Caco-2 (cell line): ENCODE measurements at regions of chr15 and their contacts with region 1.

Region 1: GRCh38 chr15:45943240-45943639 is 308.4 kb downstream of the SQOR start:
- DNase-seq: peak; percentile 38 to 70
- H3K4me3 ChIP-seq: no peak overlapping the region
- H3K4me3 Mint-ChIP-seq: no peak overlapping the region
- H3K27ac Mint-ChIP-seq: no peak overlapping the region
- H3K4me1 ChIP-seq: peaks cover 29% of the 10 kb centered on the region
- H3K4me1 Mint-ChIP-seq: peaks cover 9% of the 10 kb centered on the region
- H3K27me3 ChIP-seq: no peaks in the 10 kb centered on the region
- H3K27me3 Mint-ChIP-seq: no peaks in the 10 kb centered on the region
- CTCF ChIP-seq: no peak

Region 2: DNA sequence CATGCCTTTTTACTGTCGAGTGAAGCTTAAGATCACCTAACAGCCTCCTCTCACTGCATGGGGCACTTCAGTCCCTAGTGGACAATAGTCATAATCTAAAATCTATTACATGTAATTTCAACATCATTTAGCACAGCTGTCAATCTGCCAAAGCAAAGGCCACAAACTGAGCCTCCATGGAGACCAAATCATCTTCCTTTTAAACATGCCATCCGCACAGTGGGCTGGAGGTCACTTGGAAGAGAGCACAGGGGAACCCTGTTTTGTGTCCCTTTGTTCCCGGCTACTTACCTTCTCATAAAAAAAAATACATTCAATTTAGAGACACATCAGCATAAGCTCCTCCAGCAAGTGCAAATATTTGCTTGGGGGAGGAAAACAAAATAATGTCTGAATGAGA is 141.1 kb before region 1 on chr15:
- CTCF ChIA-PET with region 1: no interaction called
- POLR2A ChIA-PET with region 1: no interaction called
- intact Hi-C with region 1: loop called (anchors 2 kb)
- DNase-seq: peak in 1 of 2 experiments; percentile 34
- H3K4me3 ChIP-seq: no peak overlapping the region
- H3K4me3 Mint-ChIP-seq: no peak overlapping the region
- H3K27ac Mint-ChIP-seq: no peak overlapping the region
- H3K4me1 ChIP-seq: peaks cover 8% of the 10 kb centered on the region; the same call in 1 of the 2 replicates
- H3K4me1 Mint-ChIP-seq: peaks cover 8% of the 10 kb centered on the region
- H3K27me3 ChIP-seq: no peaks in the 10 kb centered on the region
- H3K27me3 Mint-ChIP-seq: no peaks in the 10 kb centered on the region
- CTCF ChIP-seq: peak in 1 of 2 experiments; percentile 12

Region 3: DNA sequence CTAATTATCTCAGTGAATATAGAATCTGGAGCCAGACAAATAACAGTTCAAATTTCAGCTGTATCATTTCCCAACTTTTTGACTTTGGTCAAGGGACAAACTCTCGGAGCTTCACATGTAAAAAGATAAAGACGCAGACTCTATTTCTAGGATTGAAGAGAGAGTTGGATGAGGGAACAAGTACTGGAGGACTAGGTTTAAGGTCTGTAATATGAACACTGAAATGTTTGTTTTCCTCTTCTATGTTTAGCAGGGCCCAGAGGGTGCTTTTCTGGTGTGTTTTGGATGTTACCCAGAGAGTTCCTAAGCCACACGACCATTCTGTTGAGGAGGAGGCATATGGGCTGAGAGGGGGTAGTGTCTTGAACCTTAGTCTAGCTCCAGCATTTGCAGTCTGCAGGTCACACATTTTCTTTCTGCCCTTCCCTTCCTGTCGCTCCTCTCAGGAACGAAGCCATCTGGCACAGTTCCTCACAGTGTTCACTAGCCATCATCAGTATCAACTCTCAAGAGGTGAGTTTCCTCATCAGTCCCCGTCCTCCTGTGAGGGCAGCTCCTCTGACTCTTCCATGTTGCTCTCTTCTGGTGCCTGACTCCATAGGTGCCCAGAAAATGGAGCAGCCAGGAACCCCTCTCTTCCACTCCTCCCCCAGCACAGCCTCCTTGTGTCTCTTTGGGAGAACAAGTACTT is 58.3 kb before region 1 on chr15:
- CTCF ChIA-PET with region 1: no interaction called
- POLR2A ChIA-PET with region 1: no interaction called
- intact Hi-C with region 1: no loop called
- DNase-seq: no peak
- H3K4me3 ChIP-seq: no peak overlapping the region
- H3K4me3 Mint-ChIP-seq: no peak overlapping the region
- H3K27ac Mint-ChIP-seq: no peak overlapping the region
- H3K4me1 ChIP-seq: no peaks in the 10 kb centered on the region
- H3K4me1 Mint-ChIP-seq: no peaks in the 10 kb centered on the region
- H3K27me3 ChIP-seq: no peaks in the 10 kb centered on the region
- H3K27me3 Mint-ChIP-seq: no peaks in the 10 kb centered on the region
- CTCF ChIP-seq: no peak

Region 4: GRCh38 chr15:45919806-45920205 is 23.4 kb before region 1 on chr15:
- CTCF ChIA-PET with region 1: no interaction called
- POLR2A ChIA-PET with region 1: no interaction called
- intact Hi-C with region 1: loop called (anchors 1 kb)
- DNase-seq: peak in 1 of 2 experiments; percentile 24
- H3K4me3 ChIP-seq: no peak overlapping the region
- H3K4me3 Mint-ChIP-seq: no peak overlapping the region
- H3K27ac Mint-ChIP-seq: peak overlapping the region; percentile 65
- H3K4me1 ChIP-seq: peaks cover 22% of the 10 kb centered on the region
- H3K4me1 Mint-ChIP-seq: peaks cover 15% of the 10 kb centered on the region
- H3K27me3 ChIP-seq: no peaks in the 10 kb centered on the region
- H3K27me3 Mint-ChIP-seq: no peaks in the 10 kb centered on the region
- CTCF ChIP-seq: no peak